PC-3 (cell line): ENCODE measurements at regions of chr6 and their contacts with region 1.

Region 1: DNA sequence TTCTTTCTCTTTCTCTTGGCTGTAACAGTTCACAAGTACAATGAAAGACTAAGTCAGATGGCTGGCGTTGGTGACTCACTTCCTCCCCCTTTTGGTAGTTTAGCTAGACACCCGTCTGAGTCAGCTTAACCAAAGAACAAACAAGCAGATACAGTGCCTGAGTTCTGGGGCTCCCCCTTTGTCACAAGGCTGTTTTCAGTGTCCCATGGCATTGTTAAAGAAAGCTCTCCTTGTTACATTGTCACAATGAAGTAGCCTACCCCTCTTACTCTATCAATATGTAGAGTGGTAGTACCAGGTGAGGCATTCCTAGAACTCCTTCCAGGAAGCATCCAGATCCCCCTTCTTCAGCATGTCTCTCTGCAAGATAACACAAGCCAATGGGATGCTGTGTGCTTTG is 38.6 kb downstream of the KIAA0408 start:
- DNase-seq: peak; percentile 89
- ATAC-seq: peak; percentile 99
- H3K4me3 ChIP-seq: no peak overlapping the region
- H3K27ac ChIP-seq: peak overlapping the region; percentile 29; the same call in 1 of the 2 replicates
- H3K4me1 ChIP-seq: peaks cover 9% of the 10 kb centered on the region
- H3K27me3 ChIP-seq: no peaks in the 10 kb centered on the region
- CTCF ChIP-seq: peak; percentile 52

Region 2: DNA sequence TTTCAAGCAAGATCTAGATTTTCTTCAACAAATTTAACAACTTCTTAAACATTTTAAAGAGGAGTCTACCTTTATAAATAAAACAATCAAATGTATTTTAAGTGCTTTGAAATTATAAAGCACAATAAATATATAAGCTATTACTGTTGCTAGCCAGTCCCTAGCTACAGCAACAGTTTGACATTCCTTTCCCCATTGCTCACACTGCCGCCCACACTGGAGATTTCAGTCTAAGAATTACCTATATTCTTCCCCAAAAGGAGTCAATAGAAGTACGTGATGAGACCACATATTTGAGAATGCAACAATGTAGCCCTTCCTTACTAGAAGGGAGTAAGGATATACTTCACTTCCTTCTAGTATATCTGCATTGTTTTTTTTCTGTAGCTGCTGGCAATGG is 219.2 kb before region 1 on chr6:
- CTCF ChIA-PET with region 1: no interaction called
- POLR2A ChIA-PET with region 1: no interaction called
- intact Hi-C with region 1: loop called (anchors 10 kb)
- DNase-seq: peak; percentile 46
- ATAC-seq: peak; percentile 85
- H3K4me3 ChIP-seq: no peak overlapping the region
- H3K27ac ChIP-seq: no peak overlapping the region
- H3K4me1 ChIP-seq: no peaks in the 10 kb centered on the region; the same call in 1 of the 2 replicates
- H3K27me3 ChIP-seq: no peaks in the 10 kb centered on the region
- CTCF ChIP-seq: no peak

Region 3: GRCh38 chr6:127302728-127303660 is 117.6 kb before region 1 on chr6:
- CTCF ChIA-PET with region 1: no interaction called
- POLR2A ChIA-PET with region 1: no interaction called
- intact Hi-C with region 1: loop called (anchors 1 kb)
- DNase-seq: peak; percentile 74
- ATAC-seq: no peak
- H3K4me3 ChIP-seq: no peak overlapping the region
- H3K27ac ChIP-seq: no peak overlapping the region
- H3K4me1 ChIP-seq: peaks cover 8% of the 10 kb centered on the region; the same call in 1 of the 2 replicates
- H3K27me3 ChIP-seq: no peaks in the 10 kb centered on the region
- CTCF ChIP-seq: peak; percentile 68

Region 4: DNA sequence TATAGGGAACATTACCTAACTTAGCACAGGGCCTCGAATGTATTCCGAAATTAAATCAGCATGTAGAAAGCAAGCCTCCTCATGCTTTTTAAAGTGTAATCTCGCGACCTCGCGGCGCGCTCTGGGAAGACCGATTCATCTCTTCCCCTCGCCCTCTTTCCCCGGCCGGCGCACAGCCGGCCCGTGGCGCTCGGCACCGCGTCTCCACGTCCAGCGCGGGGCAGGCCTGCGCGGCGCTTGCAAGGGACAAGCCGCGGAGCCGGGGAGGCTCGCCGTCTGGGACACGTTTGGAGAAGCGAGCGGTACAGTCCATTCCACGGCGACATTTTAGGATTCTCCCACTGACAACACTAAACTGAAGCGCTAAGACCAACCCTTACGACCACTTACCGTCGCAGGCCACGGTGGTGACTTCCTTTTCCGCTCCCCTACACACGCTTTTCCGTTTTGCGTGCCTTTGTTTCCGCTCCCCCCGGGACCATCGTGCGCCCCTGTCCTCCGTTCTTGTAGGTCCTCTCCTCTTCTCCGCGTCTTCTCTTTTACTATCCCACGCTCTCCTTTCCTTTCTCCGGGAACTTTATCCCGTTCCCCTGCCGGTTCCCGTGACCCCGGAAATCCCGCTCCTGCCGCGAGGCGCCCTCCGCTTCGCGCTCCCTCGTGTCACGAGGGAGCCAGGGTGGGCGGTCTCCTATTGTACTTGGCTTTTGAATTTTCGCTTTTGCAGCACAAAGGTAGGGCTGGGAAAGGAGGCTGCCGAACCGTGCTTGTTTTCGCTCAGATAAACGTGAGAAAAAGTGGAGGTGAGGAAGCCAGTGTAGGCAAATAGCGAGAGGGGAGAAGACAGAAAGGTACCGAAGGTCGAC is 77.4 kb before region 1 on chr6 and contains the start of gene ECHDC1:
- CTCF ChIA-PET with region 1: interaction called, 3 read pairs
- POLR2A ChIA-PET with region 1: no interaction called
- intact Hi-C with region 1: loop called (anchors 2 kb)
- DNase-seq: peak; percentile 65
- ATAC-seq: peak; percentile 63
- H3K4me3 ChIP-seq: peak within 1 kb of the TSS; percentile 94
- H3K27ac ChIP-seq: peak within 1 kb of the TSS; percentile 80
- H3K4me1 ChIP-seq: peaks cover 58% of the 10 kb centered on the region
- H3K27me3 ChIP-seq: no peaks in the 10 kb centered on the region
- CTCF ChIP-seq: no peak
- total RNA-seq, gene ECHDC1: 24.2 and 34.5 TPM in 2 replicates

Region 5: GRCh38 chr6:127366281-127367022 is 54.1 kb before region 1 on chr6:
- CTCF ChIA-PET with region 1: no interaction called
- POLR2A ChIA-PET with region 1: no interaction called
- intact Hi-C with region 1: loop called (anchors 2 kb)
- DNase-seq: peak; percentile 91
- ATAC-seq: peak; percentile 98
- H3K4me3 ChIP-seq: no peak overlapping the region
- H3K27ac ChIP-seq: peak overlapping the region; percentile 59
- H3K4me1 ChIP-seq: peaks cover 17% of the 10 kb centered on the region
- H3K27me3 ChIP-seq: no peaks in the 10 kb centered on the region
- CTCF ChIP-seq: no peak

Region 6: DNA sequence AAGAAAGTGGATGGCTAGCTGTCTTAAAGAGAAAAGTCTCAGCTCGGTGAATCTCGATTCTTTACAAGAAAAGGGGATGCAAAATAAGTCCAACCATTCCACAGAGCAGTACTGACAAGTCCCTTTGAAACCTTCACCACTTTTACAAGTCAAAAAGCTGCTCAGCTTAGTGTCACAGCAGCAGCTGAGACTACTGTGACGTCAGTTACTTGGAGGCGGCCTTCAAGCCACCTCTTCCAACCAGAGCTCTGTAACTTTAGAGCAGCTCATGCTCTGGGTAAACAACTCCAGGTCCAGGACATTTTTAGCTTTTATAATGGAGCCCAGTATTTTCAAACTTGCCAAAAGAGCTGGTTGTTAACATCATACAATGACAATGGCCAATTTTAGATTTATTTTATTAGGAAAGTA is 38.7 kb after region 1 on chr6 and contains the start of gene KIAA0408:
- CTCF ChIA-PET with region 1: no interaction called
- POLR2A ChIA-PET with region 1: no interaction called
- intact Hi-C with region 1: loop called (anchors 2 kb)
- DNase-seq: peak; percentile 45
- ATAC-seq: peak; percentile 81
- H3K4me3 ChIP-seq: no peak within 1 kb of the TSS
- H3K27ac ChIP-seq: no peak within 1 kb of the TSS
- H3K4me1 ChIP-seq: peaks cover 20% of the 10 kb centered on the region
- H3K27me3 ChIP-seq: no peaks in the 10 kb centered on the region
- CTCF ChIP-seq: no peak
- total RNA-seq, gene KIAA0408: 0.04 TPM in 1 of 2 replicates, not detected in the other